Posterior vena cava (tissue), 2 donors: ENCODE measurements at regions of chr2 and their contacts with region 1.

Region 1: DNA sequence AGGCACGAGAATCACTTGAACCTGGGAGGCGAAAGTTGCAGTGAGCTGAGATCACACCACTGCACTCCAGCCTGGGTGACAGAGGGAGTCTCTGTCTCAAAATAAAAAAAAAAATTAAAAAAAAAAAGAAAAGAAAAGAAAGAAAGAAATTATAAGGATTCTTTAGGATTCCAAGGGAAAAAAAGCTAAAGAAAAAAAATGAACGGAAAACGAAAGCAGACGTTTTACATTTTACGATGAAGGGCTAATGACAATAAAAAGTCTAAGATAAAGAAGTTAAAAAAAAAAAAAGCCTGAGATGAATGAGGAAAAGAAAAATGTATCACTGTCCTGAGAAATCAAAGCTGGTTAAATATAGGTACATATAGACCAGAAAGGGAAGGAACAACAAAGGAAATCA is 58.5 kb downstream of the SOS1 start:
- DNase-seq: no peak

Region 2: DNA sequence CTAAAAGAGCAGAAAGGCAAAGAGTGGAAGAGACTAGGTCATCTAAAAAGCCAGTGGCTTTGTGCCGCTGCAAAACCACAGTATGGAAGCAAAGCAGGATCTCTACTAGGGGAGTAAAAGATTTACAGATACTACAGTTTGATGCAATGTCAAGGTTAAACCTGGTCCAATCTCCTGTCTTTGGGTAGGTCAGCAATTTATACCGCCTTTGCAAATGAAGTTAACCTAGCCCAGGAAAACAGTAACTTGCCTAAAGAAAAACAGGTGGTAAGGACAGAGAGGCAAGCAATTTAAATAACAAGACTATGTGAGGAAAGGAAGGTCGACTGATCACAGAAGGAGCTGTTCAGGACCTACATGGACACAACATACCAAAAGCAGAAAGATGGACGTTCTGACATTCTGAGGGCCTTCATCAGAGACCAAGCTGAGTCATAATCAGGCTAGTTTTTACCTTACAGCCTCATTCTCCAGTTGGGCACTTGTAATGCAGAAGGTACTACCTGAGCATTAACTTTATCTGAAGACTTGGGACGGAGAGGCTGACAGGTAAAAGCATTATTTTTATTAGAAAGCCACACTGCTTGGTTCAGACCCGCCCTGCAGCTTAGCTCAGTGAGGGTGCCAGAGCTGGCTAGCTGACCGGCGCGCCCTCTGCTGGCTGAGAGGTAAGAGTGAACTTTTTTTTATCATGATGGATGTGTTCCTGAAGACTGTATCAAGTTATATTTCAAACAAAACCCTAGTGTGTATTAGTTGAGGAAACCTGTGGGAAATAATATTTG is 165.5 kb after region 1 on chr2:
- intact Hi-C with region 1: loop called (anchors 2 to 5 kb)
- DNase-seq: peak; percentile 93